ENCODE measurements at regions of chr12 and their contacts with region 1.

Region 1: GRCh38 chr12:113903381-113903863 is 62.7 kb downstream of the RBM19 start:
- DNase-seq: peak; percentile 85
- ATAC-seq: peak; percentile 58
- H3K4me3 ChIP-seq: no peak overlapping the region
- H3K27ac ChIP-seq: no peak overlapping the region
- H3K4me1 ChIP-seq: peaks cover 2% of the 10 kb centered on the region; the same call in 1 of the 2 replicates
- H3K27me3 ChIP-seq: no peaks in the 10 kb centered on the region
- CTCF ChIP-seq: no peak
- POLR2A ChIP-seq: no peak
- RAD21 ChIP-seq: no peak

Region 2: GRCh38 chr12:113837528-113838296 is 65.7 kb before region 1 on chr12:
- CTCF ChIA-PET with region 1: no interaction called
- POLR2A ChIA-PET with region 1: no interaction called
- dilution Hi-C with region 1: no loop called
- in situ Hi-C with region 1: no loop called
- intact Hi-C with region 1: loop called (anchors 2 kb)
- DNase-seq: no peak
- ATAC-seq: peak; percentile 69
- H3K4me3 ChIP-seq: no peak overlapping the region
- H3K27ac ChIP-seq: no peak overlapping the region
- H3K4me1 ChIP-seq: peaks cover 3% of the 10 kb centered on the region; the same call in 1 of the 2 replicates
- H3K27me3 ChIP-seq: no peaks in the 10 kb centered on the region
- CTCF ChIP-seq: peak; percentile 20; the same call in 1 of the 2 replicates
- POLR2A ChIP-seq: no peak
- RAD21 ChIP-seq: no peak; the same call in 1 of the 2 replicates

Region 3: GRCh38 chr12:114868995-114869834 is 965.8 kb after region 1 on chr12:
- CTCF ChIA-PET with region 1: no interaction called
- POLR2A ChIA-PET with region 1: no interaction called
- dilution Hi-C with region 1: no loop called
- in situ Hi-C with region 1: no loop called
- intact Hi-C with region 1: no loop called
- DNase-seq: peak; percentile 85
- ATAC-seq: peak; percentile 87
- H3K4me3 ChIP-seq: no peak overlapping the region
- H3K27ac ChIP-seq: peak overlapping the region; percentile 61; the same call in 1 of the 2 replicates
- H3K4me1 ChIP-seq: peaks cover 5% of the 10 kb centered on the region
- H3K27me3 ChIP-seq: no peaks in the 10 kb centered on the region
- CTCF ChIP-seq: no peak
- POLR2A ChIP-seq: no peak
- RAD21 ChIP-seq: no peak